CD4-positive, alpha-beta T cell (primary cell): ENCODE measurements at regions of chr11 and their contacts with region 1.

Region 1: GRCh38 chr11:56841210-56841810 is 92.8 kb upstream of the OR9G4 start:
- DNase-seq: peak in 4 of 14 experiments; percentile 11 to 33 (median 24)
- ATAC-seq: no peak
- H3K4me3 ChIP-seq: no peak overlapping the region
- H3K4me3 Mint-ChIP-seq: no peak overlapping the region
- H3K27ac ChIP-seq: no peak overlapping the region
- H3K27ac Mint-ChIP-seq: no peak overlapping the region
- H3K4me1 ChIP-seq: no peaks in the 10 kb centered on the region
- H3K4me1 Mint-ChIP-seq: no peaks in the 10 kb centered on the region
- H3K27me3 ChIP-seq: no peaks in the 10 kb centered on the region
- H3K27me3 Mint-ChIP-seq: peaks cover 6% of the 10 kb centered on the region
- CTCF ChIP-seq: no peak

Region 2: GRCh38 chr11:56782167-56782847 is 59.0 kb before region 1 on chr11:
- CTCF ChIA-PET with region 1: no interaction called
- POLR2A ChIA-PET with region 1: no interaction called
- intact Hi-C with region 1: no loop called
- DNase-seq: no peak
- ATAC-seq: no peak
- H3K4me3 ChIP-seq: no peak overlapping the region
- H3K4me3 Mint-ChIP-seq: no peak overlapping the region
- H3K27ac ChIP-seq: no peak overlapping the region
- H3K27ac Mint-ChIP-seq: no peak overlapping the region
- H3K4me1 ChIP-seq: no peaks in the 10 kb centered on the region
- H3K4me1 Mint-ChIP-seq: no peaks in the 10 kb centered on the region
- H3K27me3 ChIP-seq: no peaks in the 10 kb centered on the region
- H3K27me3 Mint-ChIP-seq: no peaks in the 10 kb centered on the region
- CTCF ChIP-seq: no peak

Region 3: DNA sequence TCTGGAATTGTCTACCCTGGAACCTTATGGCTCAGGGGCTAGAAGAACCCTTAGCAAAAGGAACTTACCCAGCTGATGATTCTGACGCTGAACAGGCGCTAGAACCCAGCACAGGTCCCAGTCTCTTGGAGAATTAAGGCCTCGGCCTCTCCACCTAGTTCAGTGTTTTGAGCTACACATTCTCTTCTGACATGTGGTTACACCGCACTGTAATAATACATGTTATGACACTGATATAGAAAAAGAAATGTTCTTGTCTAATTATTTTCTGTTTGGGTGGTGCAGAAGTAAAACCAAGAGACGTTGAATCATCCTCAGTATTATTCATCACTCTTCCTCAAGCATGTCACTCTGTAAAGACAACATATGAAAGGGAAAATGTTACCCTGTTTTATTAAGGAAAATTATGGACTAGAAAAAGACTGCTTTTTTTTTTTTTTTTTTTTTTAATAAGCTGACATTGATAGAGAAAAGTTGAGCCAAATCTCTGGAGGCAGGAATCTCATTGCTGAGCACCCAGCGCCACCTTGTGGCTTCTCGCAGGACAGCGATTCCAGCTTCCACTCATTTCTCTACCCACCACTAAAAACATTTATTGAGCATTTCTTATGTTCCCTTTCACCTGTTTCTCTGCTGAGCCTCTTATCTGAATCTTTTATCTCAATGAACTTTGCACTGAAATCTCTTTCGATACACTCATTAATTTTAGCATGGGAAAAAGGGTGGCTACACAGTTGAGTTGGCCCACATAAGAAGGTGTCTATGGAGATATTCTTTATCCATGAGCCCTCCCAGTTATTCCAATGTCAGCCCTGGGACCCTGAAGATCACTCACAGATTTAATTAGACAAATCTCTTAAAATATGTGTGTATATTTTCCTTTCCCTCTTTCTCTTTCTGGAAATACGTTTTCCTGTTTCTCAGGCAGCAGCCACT is 408.3 kb after region 1 on chr11:
- CTCF ChIA-PET with region 1: interaction called, 5 read pairs
- POLR2A ChIA-PET with region 1: no interaction called
- intact Hi-C with region 1: loop called in 1 of 2 experiments (anchors 2 kb)
- DNase-seq: peak in 10 of 14 experiments; percentile 11 to 56 (median 20)
- ATAC-seq: no peak
- H3K4me3 ChIP-seq: no peak overlapping the region
- H3K4me3 Mint-ChIP-seq: no peak overlapping the region
- H3K27ac ChIP-seq: no peak overlapping the region
- H3K27ac Mint-ChIP-seq: no peak overlapping the region
- H3K4me1 ChIP-seq: no peaks in the 10 kb centered on the region
- H3K4me1 Mint-ChIP-seq: peaks cover 2% of the 10 kb centered on the region
- H3K27me3 ChIP-seq: peaks cover 8 to 27% of the 10 kb centered on the region in 2 experiments
- H3K27me3 Mint-ChIP-seq: peaks cover 49% of the 10 kb centered on the region
- CTCF ChIP-seq: peak; percentile 79

Region 4: GRCh38 chr11:57536947-57537619 is 695.8 kb after region 1 on chr11 and contains the start of gene SMTNL1:
- CTCF ChIA-PET with region 1: no interaction called
- POLR2A ChIA-PET with region 1: no interaction called
- intact Hi-C with region 1: no loop called
- DNase-seq: no peak
- ATAC-seq: no peak
- H3K4me3 ChIP-seq: no peak within 1 kb of the TSS
- H3K4me3 Mint-ChIP-seq: no peak within 1 kb of the TSS
- H3K27ac ChIP-seq: no peak within 1 kb of the TSS
- H3K27ac Mint-ChIP-seq: no peak within 1 kb of the TSS
- H3K4me1 ChIP-seq: no peaks in the 10 kb centered on the region
- H3K4me1 Mint-ChIP-seq: no peaks in the 10 kb centered on the region
- H3K27me3 ChIP-seq: no peaks in the 10 kb centered on the region
- H3K27me3 Mint-ChIP-seq: no peaks in the 10 kb centered on the region
- CTCF ChIP-seq: no peak
- total RNA-seq, gene SMTNL1: not detected

Region 5: DNA sequence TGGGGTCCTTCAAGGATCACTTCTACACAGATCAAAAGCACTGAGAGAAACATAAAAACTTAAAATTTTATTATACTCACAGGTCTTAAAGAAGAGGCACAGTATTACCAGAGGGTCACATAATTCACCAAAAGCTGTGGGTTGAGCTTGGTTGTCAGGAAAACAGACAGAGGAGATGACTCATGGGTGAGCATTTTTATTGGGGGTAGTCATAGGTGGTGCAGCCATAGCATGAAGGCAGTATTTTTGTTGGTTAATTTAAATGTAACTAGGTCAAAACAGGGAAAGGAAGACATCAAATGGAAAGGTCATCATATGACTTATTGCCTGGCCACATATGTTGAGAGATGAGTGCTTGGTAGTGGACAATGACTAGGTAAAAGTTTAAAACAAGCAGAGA is 1493.4 kb after region 1 on chr11:
- CTCF ChIA-PET with region 1: no interaction called
- POLR2A ChIA-PET with region 1: no interaction called
- intact Hi-C with region 1: no loop called
- DNase-seq: no peak
- ATAC-seq: no peak
- H3K4me3 ChIP-seq: no peak overlapping the region
- H3K4me3 Mint-ChIP-seq: no peak overlapping the region
- H3K27ac ChIP-seq: no peak overlapping the region
- H3K27ac Mint-ChIP-seq: no peak overlapping the region
- H3K4me1 ChIP-seq: no peaks in the 10 kb centered on the region
- H3K4me1 Mint-ChIP-seq: no peaks in the 10 kb centered on the region
- H3K27me3 ChIP-seq: no peaks in the 10 kb centered on the region
- H3K27me3 Mint-ChIP-seq: peaks cover 47% of the 10 kb centered on the region
- CTCF ChIP-seq: no peak